ENCODE measurements at regions of chr14 and their contacts with region 1.

Region 1: DNA sequence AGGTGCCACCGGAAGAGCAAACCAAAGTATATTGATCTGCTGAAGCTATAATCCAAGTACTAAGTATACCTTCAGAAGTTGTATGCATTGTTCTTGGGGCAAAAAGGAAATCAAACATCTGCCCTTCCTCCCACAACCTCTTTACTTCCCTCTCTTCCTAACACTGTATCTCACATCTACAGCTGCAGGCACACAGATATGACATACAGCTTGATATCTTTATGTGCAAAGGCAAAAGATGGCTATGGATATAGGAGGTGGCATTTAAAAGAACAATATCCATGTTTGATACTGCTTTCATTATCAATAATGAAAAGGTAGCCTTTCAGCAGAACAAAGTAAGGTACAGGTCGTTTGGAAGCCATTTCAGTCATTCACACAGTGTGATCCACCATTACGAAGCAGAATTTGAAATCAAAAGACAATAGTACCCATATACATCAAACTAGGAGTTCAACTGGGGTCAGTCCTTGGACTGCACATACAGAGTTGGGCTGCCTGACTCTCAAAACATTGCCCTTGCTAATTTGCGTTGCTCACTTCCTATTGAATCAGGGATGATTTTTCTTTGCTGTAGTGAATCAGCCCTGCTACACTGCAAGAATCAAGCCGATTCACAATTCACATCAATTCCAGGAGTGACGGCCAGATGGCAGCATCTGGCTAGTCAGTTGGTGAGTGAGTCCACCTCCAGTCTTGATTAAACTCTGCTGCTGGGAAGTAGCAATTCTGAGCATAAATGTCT is 8.9 kb downstream of the ANG start:
- DNase-seq: peak; percentile 37 to 48
- ATAC-seq: peak; percentile 69 to 87 (median 76)
- H3K4me3 ChIP-seq: no peak overlapping the region
- H3K27ac ChIP-seq: no peak overlapping the region
- H3K4me1 ChIP-seq: peaks cover 0 to 10% (median 0%) of the 10 kb centered on the region in 9 donors
- H3K27me3 ChIP-seq: no peaks in the 10 kb centered on the region
- CTCF ChIP-seq: peak; percentile 63 to 87 (median 82)

Region 2: DNA sequence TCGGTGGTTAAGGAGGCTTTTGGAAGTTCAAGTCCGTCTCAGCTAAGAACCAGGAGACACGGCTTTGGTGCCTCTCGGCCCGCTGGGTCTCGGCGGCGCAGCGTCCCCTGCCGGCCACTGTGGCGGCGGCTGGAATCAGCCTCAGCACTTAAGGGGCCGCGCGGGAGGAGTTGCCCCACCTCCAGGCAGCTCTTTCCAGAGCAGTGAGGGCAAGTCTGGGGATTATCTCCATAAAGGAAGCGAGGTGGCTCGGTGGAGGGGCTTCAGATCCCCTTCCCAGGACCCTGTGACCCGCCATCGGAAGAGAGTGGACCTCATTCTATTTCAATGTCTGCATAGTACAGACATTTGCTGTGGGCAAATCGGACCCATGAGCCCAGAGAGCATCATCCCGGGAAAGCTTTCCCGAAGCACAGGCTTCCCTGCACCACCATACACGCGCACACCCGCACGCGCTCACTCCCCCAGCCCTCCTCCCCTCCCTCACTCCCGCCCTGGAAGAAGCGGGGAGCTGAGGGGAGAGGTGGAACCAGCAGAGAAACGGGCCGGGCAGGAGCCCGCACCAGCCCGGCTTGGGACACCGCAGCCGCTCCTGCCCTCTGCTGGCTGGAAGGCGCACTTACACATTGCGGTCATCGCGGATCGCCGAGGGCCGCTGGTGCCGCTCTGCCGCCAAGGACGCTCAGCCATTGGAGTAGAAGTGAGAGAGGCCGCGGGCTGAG is 273.7 kb after region 1 on chr14:
- intact Hi-C with region 1: loop called in 8 of 10 experiments (anchors 5 to 10 kb)
- DNase-seq: peak; percentile 83 to 87
- ATAC-seq: peak; percentile 95 to 98 (median 97)
- H3K4me3 ChIP-seq: peak overlapping the region; percentile 33 to 79 (median 68)
- H3K27ac ChIP-seq: peak overlapping the region in 9 of 10 donors; percentile 41 to 87 (median 69)
- H3K4me1 ChIP-seq: peaks cover 0 to 18% (median 8%) of the 10 kb centered on the region in 9 donors
- H3K27me3 ChIP-seq: peaks cover 0 to 7% (median 0%) of the 10 kb centered on the region in 7 donors
- CTCF ChIP-seq: peak; percentile 70 to 91 (median 78)

Measured in heart right ventricle (tissue), 16 donors.